ENCODE measurements at regions of chr17 and their contacts with region 1.

Region 1: DNA sequence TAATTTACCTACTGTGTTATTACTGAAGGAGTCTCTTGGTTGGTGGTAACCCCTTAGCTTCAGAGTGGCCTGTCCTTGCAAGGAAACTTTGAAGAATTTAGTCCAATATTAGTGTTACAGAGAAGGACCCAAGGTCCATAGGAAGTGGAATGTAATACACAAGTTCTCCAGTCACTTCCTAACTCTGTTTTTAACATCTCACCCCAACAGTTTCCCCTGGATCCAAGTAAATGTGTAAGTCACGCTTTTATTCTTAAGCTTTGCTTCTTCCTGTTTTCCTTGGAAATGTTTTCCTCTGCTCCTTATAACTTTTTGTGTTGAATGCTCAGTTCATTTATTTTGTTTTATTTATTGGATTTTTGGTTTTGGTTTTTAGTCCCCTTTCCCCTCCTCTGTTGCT is 25.9 kb upstream of the RPRML start:
- DNase-seq: no peak
- ATAC-seq: no peak
- H3K4me3 ChIP-seq: no peak overlapping the region
- H3K27ac ChIP-seq: no peak overlapping the region
- H3K4me1 ChIP-seq: no peaks in the 10 kb centered on the region
- H3K27me3 ChIP-seq: no peaks in the 10 kb centered on the region

Region 2: GRCh38 chr17:46841561-46842379 is 163.1 kb before region 1 on chr17:
- intact Hi-C with region 1: loop called in 1 of 4 experiments (anchors 5 kb)
- DNase-seq: peak in 1 of 3 donors; percentile 62
- ATAC-seq: peak; percentile 70 to 88
- H3K4me3 ChIP-seq: no peak overlapping the region
- H3K27ac ChIP-seq: no peak overlapping the region
- H3K4me1 ChIP-seq: no peaks in the 10 kb centered on the region
- H3K27me3 ChIP-seq: no peaks in the 10 kb centered on the region

Region 3: GRCh38 chr17:46916211-46916610 is 88.7 kb before region 1 on chr17:
- intact Hi-C with region 1: no loop called
- DNase-seq: no peak
- ATAC-seq: no peak
- H3K4me3 ChIP-seq: no peak overlapping the region
- H3K27ac ChIP-seq: no peak overlapping the region
- H3K4me1 ChIP-seq: no peaks in the 10 kb centered on the region
- H3K27me3 ChIP-seq: no peaks in the 10 kb centered on the region

Region 4: DNA sequence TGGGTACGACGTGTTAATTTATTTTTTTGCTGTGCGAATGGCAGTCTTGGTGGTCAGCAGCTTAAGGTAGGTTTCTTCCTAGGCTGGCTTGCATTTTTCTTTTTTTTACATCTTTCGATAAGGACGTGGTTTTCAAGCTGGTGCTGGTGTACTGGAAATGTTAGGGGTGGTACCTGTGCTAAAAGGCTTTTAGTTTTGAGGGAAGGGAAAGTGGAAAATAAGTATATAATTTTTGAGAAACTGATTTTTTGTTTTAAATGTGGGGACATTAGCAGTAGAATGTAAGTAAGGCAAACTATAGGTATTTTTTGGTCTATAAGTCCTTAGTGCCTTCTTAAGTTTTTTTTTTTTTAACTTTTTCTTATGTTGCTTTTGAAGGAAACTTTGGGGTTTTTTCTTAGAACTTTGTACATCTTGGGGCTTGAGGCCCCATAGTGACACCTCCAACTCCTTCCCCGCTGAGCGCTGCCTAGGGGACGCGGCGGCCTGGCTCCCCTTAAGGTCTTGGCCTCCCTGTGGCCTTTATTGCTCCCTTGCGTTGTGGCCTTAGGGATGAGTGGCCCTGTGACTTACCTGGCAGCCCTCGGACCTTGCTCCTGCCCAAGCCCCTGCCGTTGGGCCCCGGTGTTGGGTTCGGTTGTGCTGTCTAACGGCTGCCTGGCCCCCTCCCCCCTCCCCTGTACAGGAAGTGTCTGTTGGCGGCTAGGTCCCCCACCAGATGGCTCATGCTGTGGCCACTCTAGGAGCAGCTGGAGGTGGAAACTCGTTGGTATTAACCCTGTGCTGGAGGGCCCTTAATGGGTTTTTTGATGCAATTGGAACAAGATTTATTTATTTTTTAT is 62.2 kb after region 1 on chr17:
- intact Hi-C with region 1: no loop called
- DNase-seq: peak; percentile 86 to 92 (median 89)
- ATAC-seq: peak; percentile 94 to 95
- H3K4me3 ChIP-seq: peak overlapping the region; percentile 83
- H3K27ac ChIP-seq: peak overlapping the region; percentile 98
- H3K4me1 ChIP-seq: no peaks in the 10 kb centered on the region
- H3K27me3 ChIP-seq: no peaks in the 10 kb centered on the region

Region 5: GRCh38 chr17:47229535-47230443 is 224.9 kb after region 1 on chr17:
- intact Hi-C with region 1: no loop called
- DNase-seq: peak; percentile 86 to 92 (median 87)
- ATAC-seq: peak; percentile 47 to 60
- H3K4me3 ChIP-seq: no peak overlapping the region
- H3K27ac ChIP-seq: peak overlapping the region; percentile 52
- H3K4me1 ChIP-seq: peaks cover 6% of the 10 kb centered on the region
- H3K27me3 ChIP-seq: no peaks in the 10 kb centered on the region

Region 6: GRCh38 chr17:47279062-47279736 is 274.3 kb after region 1 on chr17:
- intact Hi-C with region 1: no loop called
- DNase-seq: peak; percentile 77 to 89 (median 85)
- ATAC-seq: peak; percentile 76 to 86
- H3K4me3 ChIP-seq: no peak overlapping the region
- H3K27ac ChIP-seq: peak overlapping the region; percentile 95
- H3K4me1 ChIP-seq: peaks cover 33% of the 10 kb centered on the region
- H3K27me3 ChIP-seq: no peaks in the 10 kb centered on the region